Uterus (tissue), 4 donors: ENCODE measurements at regions of chr16 and their contacts with region 1.

Region 1: DNA sequence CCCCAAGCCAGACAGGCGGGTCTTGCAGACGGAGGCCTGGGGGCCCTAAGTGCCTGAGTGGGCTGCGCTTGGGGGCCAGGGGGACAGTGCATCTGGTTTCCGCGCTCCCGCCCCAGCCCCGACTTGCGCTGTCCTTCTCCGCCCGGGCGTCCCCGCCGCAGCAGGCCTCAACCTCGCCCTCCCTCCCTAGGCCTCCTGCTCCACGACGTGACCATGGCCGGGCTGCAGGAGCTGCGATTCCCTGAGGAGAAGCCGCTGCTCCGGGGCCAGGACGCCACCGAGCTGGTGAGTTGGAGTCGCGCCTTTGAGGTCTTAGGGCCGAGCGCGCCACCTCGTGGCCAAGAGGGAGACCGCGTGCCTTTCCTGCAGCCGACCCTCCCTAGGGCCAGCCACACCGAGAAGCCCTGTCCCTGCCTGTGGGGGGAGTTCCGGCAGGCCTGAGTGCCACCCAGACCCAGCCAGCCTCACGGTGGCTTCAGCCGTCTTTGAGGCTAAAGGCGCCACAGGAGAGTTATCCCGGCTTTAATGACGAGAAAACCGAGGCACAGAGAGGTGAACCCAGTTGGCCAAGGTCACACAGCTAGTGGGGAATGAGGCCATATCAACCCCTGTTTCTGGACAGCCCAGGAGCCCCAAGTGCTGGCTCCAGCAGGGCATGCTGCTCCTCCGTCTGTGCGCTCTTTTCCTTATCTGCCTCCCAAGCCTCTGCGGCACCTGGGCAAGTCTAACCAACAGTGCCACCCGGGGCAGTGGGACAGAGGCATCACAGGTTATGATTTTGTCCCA is 12.2 kb upstream of the NDRG4 start:
- DNase-seq: peak; percentile 79 to 82
- H3K4me3 ChIP-seq: no peak overlapping the region
- H3K27ac ChIP-seq: no peak overlapping the region
- H3K4me1 ChIP-seq: no peaks in the 10 kb centered on the region
- H3K27me3 ChIP-seq: no peaks in the 10 kb centered on the region
- CTCF ChIP-seq: peak; percentile 91 to 96 (median 94)
- POLR2A ChIP-seq: no peak

Region 2: GRCh38 chr16:58345574-58346354 is 142.0 kb before region 1 on chr16:
- intact Hi-C with region 1: loop called (anchors 5 kb)
- DNase-seq: no peak
- H3K4me3 ChIP-seq: no peak overlapping the region
- H3K27ac ChIP-seq: no peak overlapping the region
- H3K4me1 ChIP-seq: no peaks in the 10 kb centered on the region
- H3K27me3 ChIP-seq: no peaks in the 10 kb centered on the region
- CTCF ChIP-seq: peak in 2 of 4 experiments; percentile 6 to 16
- POLR2A ChIP-seq: no peak

Region 3: DNA sequence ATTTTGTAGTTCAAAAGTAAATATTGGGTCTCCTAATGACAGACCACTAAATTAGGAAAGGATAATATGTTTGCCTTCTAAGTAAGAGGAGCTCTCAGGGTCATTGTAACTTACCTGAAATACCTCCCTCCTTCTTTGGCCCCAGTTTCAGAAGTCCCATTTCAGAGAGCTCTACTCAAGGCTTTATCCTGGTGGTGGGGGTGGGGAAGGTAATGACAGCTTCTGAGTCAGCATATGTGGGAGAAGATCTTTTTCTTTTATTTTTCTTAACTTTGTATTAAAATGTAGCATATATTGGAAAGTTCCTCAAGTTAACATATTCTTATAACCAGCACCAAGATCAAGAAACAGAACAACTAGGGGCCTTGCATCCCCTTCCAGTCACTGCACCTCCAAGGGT is 112.4 kb before region 1 on chr16:
- intact Hi-C with region 1: no loop called
- DNase-seq: no peak
- H3K4me3 ChIP-seq: no peak overlapping the region
- H3K27ac ChIP-seq: no peak overlapping the region
- H3K4me1 ChIP-seq: no peaks in the 10 kb centered on the region
- H3K27me3 ChIP-seq: no peaks in the 10 kb centered on the region
- CTCF ChIP-seq: no peak
- POLR2A ChIP-seq: no peak